Activated T-helper 1 cell treated with anti-CD3 and anti-CD28 coated beads, Interleukin-12 subunit alpha, Interleukin-12 subunit beta, Interleukin-2, Interleukin-4 antibody, amounts not matched to agents 30 ng/mL and 10 ng/mL and 1 ng/mL, durations not matched to agents 14 hours and 24 hours and 36 hours (primary cell): ENCODE measurements at regions of chr1 and their contacts with region 1.

Region 1: GRCh38 chr1:161726596-161727457 is 5.5 kb downstream of the FCRLB start:
- DNase-seq: peak; percentile 50
- H3K4me3 Mint-ChIP-seq: peak overlapping the region; percentile 86
- H3K27ac Mint-ChIP-seq: no peak overlapping the region
- H3K4me1 Mint-ChIP-seq: peaks cover 48% of the 10 kb centered on the region
- H3K27me3 Mint-ChIP-seq: peaks cover 64% of the 10 kb centered on the region

Region 2: DNA sequence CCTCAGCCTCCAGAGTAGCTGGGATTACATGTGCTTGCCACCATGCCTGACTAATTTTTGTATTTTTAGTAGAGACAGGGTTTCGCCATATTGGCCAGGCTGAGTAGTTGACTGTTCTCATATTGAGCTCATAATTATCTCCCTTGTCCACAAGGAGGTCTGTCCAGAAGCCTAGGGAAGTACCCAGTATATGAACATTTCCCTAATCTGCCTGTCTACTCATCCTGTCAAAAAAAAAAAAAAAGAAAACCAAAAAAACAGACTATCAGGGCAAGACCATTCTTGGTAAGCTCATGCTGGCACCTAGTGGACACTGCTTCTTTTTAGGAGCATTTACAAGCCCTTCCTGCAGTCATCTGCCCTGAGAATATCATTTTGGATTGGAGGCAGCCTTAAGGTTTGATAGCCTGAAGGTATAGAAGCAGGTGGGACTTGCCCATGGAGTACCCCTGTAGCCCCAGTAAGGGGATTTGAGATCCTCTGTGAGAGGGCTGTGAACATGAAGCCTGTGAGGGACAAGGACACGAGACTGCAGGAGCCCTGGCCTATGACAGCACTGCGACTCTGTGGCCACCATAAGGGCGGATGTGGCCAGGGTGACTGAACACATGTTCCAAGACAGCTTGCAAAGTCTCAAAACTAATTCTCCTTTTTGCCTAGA is 11.9 kb after region 1 on chr1:
- intact Hi-C with region 1: loop called (anchors 1 kb)
- DNase-seq: peak; percentile 54
- H3K4me3 Mint-ChIP-seq: no peak overlapping the region
- H3K27ac Mint-ChIP-seq: peak overlapping the region; percentile 20
- H3K4me1 Mint-ChIP-seq: peaks cover 41% of the 10 kb centered on the region
- H3K27me3 Mint-ChIP-seq: peaks cover 29% of the 10 kb centered on the region

Region 3: GRCh38 chr1:161749509-161750407 is 22.9 kb after region 1 on chr1 and contains the start of gene DUSP12:
- intact Hi-C with region 1: loop called (anchors 1 kb)
- DNase-seq: peak; percentile 82
- H3K4me3 Mint-ChIP-seq: peak within 1 kb of the TSS; percentile 98
- H3K27ac Mint-ChIP-seq: peak within 1 kb of the TSS; percentile 99
- H3K4me1 Mint-ChIP-seq: peaks cover 32% of the 10 kb centered on the region
- H3K27me3 Mint-ChIP-seq: peaks cover 27% of the 10 kb centered on the region
- total RNA-seq, gene DUSP12: 34.1 and 36.0 TPM in 2 replicates